ENCODE measurements at regions of chr5 and their contacts with region 1.

Region 1: DNA sequence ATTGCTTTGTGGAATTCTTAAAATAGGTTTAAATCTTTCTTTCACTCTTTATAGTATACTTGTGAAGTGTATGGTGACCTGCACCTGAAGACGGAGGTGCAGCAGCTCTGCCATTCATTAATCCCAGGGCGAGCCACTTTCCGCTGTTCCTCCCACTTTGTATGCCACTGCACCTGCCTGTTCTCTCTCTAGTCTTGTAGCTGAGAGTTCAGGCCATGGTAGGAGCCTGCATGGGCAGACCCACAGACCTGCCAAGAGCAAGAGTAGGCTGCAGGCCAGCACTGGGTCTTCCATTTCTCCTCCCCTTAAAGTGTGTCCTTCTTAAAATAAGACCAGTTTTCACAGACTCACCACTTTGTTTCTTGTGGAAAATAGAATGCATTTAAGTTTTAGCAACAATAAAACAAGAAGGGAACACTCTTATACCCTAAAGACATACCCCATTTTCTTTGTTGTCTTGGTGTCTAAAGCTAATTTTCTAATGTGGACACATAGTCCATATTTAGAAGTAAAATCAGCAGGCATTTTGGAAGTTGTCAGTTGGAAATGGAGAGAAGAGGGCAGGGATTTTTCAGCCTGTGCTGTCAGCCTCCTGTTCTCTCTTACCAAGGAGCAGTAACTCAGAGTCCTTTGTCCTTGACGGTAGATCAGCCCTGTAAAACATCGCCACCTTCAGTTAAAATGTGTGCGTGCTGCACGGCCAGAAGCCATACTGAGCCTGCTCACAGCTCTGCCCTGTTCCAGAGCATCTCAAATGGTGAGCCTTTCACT is 103.2 kb downstream of the SNCAIP start:
- DNase-seq: peak; percentile 70 to 74
- H3K4me3 ChIP-seq: no peak overlapping the region
- H3K4me3 Mint-ChIP-seq: no peak overlapping the region
- H3K27ac Mint-ChIP-seq: no peak overlapping the region
- H3K4me1 ChIP-seq: peaks cover 15% of the 10 kb centered on the region
- H3K4me1 Mint-ChIP-seq: peaks cover 9% of the 10 kb centered on the region
- H3K27me3 ChIP-seq: no peaks in the 10 kb centered on the region
- H3K27me3 Mint-ChIP-seq: peaks cover 3% of the 10 kb centered on the region
- CTCF ChIP-seq: peak; percentile 73 to 87

Region 2: DNA sequence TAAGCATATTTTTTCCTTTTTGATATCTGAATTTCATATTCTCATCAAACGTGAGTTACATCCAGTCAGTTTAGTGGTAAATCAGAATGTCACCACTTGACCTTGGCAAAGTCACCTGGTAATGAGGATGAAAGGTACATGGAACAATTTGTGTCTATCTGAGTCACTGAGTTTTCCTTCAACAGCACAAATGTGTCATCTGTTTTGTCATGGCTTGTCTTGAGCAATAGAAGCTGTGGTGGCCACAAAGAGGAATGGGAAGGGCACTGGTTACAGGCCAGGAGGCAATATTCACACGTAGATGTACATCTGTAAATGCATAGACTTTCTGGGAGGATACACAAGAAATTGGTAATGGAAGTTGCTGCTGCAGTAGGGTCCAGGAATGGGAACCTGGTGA is 294.3 kb before region 1 on chr5:
- CTCF ChIA-PET with region 1: no interaction called
- POLR2A ChIA-PET with region 1: no interaction called
- intact Hi-C with region 1: no loop called
- DNase-seq: no peak
- H3K4me3 ChIP-seq: no peak overlapping the region
- H3K4me3 Mint-ChIP-seq: no peak overlapping the region
- H3K27ac Mint-ChIP-seq: no peak overlapping the region
- H3K4me1 ChIP-seq: no peaks in the 10 kb centered on the region
- H3K4me1 Mint-ChIP-seq: no peaks in the 10 kb centered on the region
- H3K27me3 ChIP-seq: no peaks in the 10 kb centered on the region; the same call in 1 of the 2 replicates
- H3K27me3 Mint-ChIP-seq: peaks cover 15% of the 10 kb centered on the region
- CTCF ChIP-seq: no peak

Region 3: GRCh38 chr5:122192497-122193496 is 222.4 kb before region 1 on chr5:
- CTCF ChIA-PET with region 1: interaction called, 9 read pairs
- POLR2A ChIA-PET with region 1: no interaction called
- intact Hi-C with region 1: loop called (anchors 1 kb)
- DNase-seq: peak in 1 of 2 experiments; percentile 69
- H3K4me3 ChIP-seq: no peak overlapping the region
- H3K4me3 Mint-ChIP-seq: no peak overlapping the region
- H3K27ac Mint-ChIP-seq: no peak overlapping the region
- H3K4me1 ChIP-seq: no peaks in the 10 kb centered on the region
- H3K4me1 Mint-ChIP-seq: no peaks in the 10 kb centered on the region
- H3K27me3 ChIP-seq: no peaks in the 10 kb centered on the region
- H3K27me3 Mint-ChIP-seq: peaks cover 6% of the 10 kb centered on the region
- CTCF ChIP-seq: peak; percentile 54 to 66

Region 4: DNA sequence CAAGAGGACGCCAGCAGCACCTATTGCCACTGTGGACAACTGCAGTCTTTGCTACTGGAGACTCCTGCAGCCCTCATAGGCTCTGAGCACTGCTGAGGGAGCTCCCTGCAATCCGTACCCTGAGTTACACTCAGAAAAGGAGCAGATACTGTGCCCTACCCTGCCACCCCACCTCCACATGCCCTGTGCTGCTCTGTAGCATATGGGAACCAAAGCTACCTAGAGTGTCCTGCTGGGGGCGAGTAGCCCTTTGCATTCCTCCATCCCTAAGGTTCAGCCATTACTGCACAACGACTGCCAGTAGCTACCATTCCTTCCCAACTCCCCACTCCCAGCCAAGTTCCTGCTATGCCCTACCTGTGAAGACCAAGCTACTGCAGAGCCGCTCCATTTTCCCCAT is 193.4 kb before region 1 on chr5:
- CTCF ChIA-PET with region 1: no interaction called
- POLR2A ChIA-PET with region 1: no interaction called
- intact Hi-C with region 1: loop called (anchors 1 kb)
- DNase-seq: peak in 1 of 2 experiments; percentile 6
- H3K4me3 ChIP-seq: no peak overlapping the region
- H3K4me3 Mint-ChIP-seq: no peak overlapping the region
- H3K27ac Mint-ChIP-seq: no peak overlapping the region
- H3K4me1 ChIP-seq: no peaks in the 10 kb centered on the region
- H3K4me1 Mint-ChIP-seq: no peaks in the 10 kb centered on the region
- H3K27me3 ChIP-seq: no peaks in the 10 kb centered on the region
- H3K27me3 Mint-ChIP-seq: peaks cover 9% of the 10 kb centered on the region
- CTCF ChIP-seq: no peak

Region 5: GRCh38 chr5:122311961-122312590 is 103.1 kb before region 1 on chr5 and contains the start of gene SNCAIP:
- CTCF ChIA-PET with region 1: no interaction called
- POLR2A ChIA-PET with region 1: no interaction called
- intact Hi-C with region 1: loop called (anchors 5 kb)
- DNase-seq: peak; percentile 56 to 63
- H3K4me3 ChIP-seq: peak within 1 kb of the TSS; percentile 43
- H3K4me3 Mint-ChIP-seq: peak within 1 kb of the TSS; percentile 75
- H3K27ac Mint-ChIP-seq: no peak within 1 kb of the TSS
- H3K4me1 ChIP-seq: no peaks in the 10 kb centered on the region
- H3K4me1 Mint-ChIP-seq: peaks cover 9% of the 10 kb centered on the region
- H3K27me3 ChIP-seq: no peaks in the 10 kb centered on the region
- H3K27me3 Mint-ChIP-seq: peaks cover 6% of the 10 kb centered on the region
- CTCF ChIP-seq: no peak
- total RNA-seq, gene SNCAIP: 1.0 and 1.2 TPM in 2 replicates

Region 6: DNA sequence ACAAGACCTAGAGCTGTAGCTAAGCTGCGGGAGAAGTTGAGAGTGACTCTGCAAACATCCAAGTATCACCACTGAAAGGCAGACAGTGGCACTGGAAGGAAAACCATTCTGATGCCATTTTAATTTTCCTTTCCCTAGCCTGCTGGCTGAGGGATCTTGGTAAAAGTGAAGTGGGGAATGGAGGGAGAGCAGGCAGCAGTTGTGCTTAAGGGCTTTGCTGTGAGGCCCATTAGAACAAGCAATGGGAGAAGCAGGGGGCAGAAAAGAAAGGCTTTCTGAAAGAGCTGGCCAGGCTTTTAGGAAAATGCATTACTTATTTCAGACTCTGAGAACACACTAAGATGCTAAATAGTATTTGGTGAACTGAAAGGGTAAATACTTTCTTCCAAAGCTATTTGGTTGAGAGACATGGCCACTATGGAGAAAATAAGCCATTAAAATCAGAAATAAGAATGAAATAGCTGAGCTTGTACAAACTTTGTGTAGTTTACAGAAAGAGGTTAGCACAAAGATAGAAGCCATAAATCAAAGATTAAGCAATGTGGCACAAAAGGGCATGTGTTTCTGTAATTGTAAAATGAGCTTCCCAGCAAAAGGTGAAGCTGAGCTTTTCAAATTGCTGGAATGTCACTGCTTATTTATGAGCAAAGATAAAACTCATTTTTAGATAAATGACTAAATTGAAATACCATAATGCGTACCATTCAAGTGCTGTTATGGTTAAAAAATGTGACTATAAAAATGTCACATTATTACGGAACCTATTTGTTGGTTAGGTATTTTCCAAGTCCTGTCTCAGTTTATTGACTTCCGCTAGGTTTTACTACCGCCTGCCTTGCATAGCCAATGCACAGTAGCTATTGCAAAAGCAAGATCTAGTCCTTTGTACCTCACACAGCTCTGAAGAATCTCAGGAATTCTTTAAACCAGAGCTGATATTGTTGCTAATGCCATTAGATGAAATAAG is 82.3 kb before region 1 on chr5:
- CTCF ChIA-PET with region 1: no interaction called
- POLR2A ChIA-PET with region 1: no interaction called
- intact Hi-C with region 1: loop called (anchors 2 kb)
- DNase-seq: peak; percentile 59 to 69
- H3K4me3 ChIP-seq: no peak overlapping the region
- H3K4me3 Mint-ChIP-seq: peak overlapping the region; percentile 42
- H3K27ac Mint-ChIP-seq: peak overlapping the region; percentile 53
- H3K4me1 ChIP-seq: peaks cover 23% of the 10 kb centered on the region
- H3K4me1 Mint-ChIP-seq: peaks cover 21% of the 10 kb centered on the region
- H3K27me3 ChIP-seq: no peaks in the 10 kb centered on the region
- H3K27me3 Mint-ChIP-seq: no peaks in the 10 kb centered on the region
- CTCF ChIP-seq: no peak

Region 7: DNA sequence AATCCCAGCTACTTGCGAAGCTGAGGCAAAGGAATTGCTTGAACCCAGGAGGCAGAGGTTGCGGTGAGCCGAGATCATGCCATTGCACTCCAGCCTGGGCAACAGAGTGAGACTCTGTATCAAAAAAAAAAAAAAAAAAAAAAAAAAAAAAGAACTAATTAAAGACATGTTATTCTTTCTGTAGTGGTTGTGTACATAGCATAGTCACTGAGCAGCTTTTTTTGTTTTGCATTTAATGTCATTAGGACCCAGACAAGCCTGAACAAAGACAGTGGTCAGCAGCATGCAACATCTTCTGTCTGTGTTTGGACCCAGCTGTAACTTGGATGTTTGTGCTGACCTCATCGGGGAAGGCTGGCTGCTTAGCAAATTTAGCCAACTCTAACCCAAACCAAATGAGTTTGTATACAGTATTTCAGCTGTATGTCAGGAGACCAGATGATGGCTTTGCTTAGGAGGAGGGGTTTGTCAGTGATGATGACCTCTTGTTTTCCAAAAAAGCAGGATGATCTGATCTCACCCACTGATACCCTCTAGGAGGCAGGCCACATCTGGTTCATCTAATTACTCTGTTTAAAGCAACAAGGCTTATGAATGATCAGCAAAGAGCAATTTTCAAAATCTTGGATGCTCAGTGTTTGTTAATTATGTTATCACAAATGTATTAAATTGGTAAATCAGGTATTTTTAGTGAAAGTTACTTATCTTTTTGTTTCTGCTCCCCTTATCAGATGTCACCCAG is 63.6 kb before region 1 on chr5:
- CTCF ChIA-PET with region 1: no interaction called
- POLR2A ChIA-PET with region 1: no interaction called
- intact Hi-C with region 1: loop called (anchors 2 kb)
- DNase-seq: peak in 1 of 2 experiments; percentile 43
- H3K4me3 ChIP-seq: no peak overlapping the region
- H3K4me3 Mint-ChIP-seq: peak overlapping the region; percentile 31
- H3K27ac Mint-ChIP-seq: peak overlapping the region; percentile 56
- H3K4me1 ChIP-seq: peaks cover 25% of the 10 kb centered on the region
- H3K4me1 Mint-ChIP-seq: peaks cover 24% of the 10 kb centered on the region
- H3K27me3 ChIP-seq: no peaks in the 10 kb centered on the region
- H3K27me3 Mint-ChIP-seq: no peaks in the 10 kb centered on the region
- CTCF ChIP-seq: no peak

Region 8: DNA sequence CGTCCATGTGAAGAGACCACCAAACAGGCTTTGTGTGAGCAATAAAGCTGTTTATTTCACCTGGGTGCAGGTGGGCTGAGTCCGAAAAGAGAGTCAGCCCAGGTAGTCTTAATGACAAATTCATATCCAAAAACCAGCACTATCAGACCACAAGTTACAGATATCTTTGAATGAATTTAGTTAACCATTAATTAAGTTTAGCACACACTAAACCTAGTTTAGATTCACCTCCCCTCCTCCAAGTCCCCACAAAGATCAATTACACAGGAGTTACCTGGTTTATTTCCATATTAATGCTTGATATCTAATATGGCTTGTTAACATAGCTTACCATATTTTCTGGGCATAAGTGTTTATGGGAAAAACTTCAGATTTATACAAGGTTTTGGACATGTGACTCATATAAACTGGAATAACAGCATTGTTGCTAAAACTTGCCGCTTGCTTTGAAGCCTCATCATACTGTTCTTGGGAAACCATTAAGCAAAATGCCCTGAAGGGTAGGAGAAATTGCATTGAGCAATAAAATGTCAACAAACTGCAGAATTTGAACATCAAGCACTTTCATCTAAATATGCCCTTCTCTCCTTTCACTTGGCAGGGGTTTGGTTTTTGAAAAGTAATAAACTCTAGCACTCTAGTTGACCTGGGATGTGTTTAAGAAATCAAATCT is 63.7 kb after region 1 on chr5:
- CTCF ChIA-PET with region 1: no interaction called
- POLR2A ChIA-PET with region 1: no interaction called
- intact Hi-C with region 1: no loop called
- DNase-seq: peak; percentile 50 to 75
- H3K4me3 ChIP-seq: peak overlapping the region; percentile 32
- H3K4me3 Mint-ChIP-seq: peak overlapping the region; percentile 83
- H3K27ac Mint-ChIP-seq: peak overlapping the region; percentile 94
- H3K4me1 ChIP-seq: peaks cover 30% of the 10 kb centered on the region
- H3K4me1 Mint-ChIP-seq: peaks cover 33% of the 10 kb centered on the region
- H3K27me3 ChIP-seq: no peaks in the 10 kb centered on the region
- H3K27me3 Mint-ChIP-seq: no peaks in the 10 kb centered on the region
- CTCF ChIP-seq: no peak

Region 9: DNA sequence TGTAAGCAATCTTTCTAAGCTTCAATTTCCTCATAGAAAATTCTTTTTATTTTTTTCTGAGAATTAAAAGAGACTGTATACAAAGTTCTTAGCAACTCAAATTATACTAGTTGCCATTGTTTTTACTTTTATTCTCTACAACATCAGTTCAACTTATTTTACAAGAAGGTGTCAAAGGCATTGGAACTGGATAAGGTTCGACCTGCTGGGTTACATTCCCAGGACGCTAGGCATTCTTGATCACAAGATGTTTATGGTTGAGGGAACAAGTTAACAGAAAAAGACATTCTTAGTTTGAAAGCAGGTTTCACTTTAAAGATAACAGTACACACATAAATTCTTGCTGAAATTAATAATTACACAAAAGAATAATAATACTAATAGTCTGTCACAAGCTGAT is 196.2 kb after region 1 on chr5:
- CTCF ChIA-PET with region 1: no interaction called
- POLR2A ChIA-PET with region 1: no interaction called
- intact Hi-C with region 1: no loop called
- DNase-seq: peak; percentile 56 to 62
- H3K4me3 ChIP-seq: no peak overlapping the region
- H3K4me3 Mint-ChIP-seq: no peak overlapping the region
- H3K27ac Mint-ChIP-seq: no peak overlapping the region
- H3K4me1 ChIP-seq: peaks cover 20% of the 10 kb centered on the region
- H3K4me1 Mint-ChIP-seq: peaks cover 16% of the 10 kb centered on the region
- H3K27me3 ChIP-seq: no peaks in the 10 kb centered on the region
- H3K27me3 Mint-ChIP-seq: no peaks in the 10 kb centered on the region
- CTCF ChIP-seq: no peak